ENCODE measurements at regions of chr4 and their contacts with region 1.

Region 1: GRCh38 chr4:163494360-163495162 is at the start of gene TMA16:
- DNase-seq: peak; percentile 90 to 91
- H3K4me3 ChIP-seq: peak within 1 kb of the TSS; percentile 64
- H3K4me3 Mint-ChIP-seq: peak within 1 kb of the TSS; percentile 90
- H3K27ac Mint-ChIP-seq: peak within 1 kb of the TSS; percentile 99
- H3K4me1 ChIP-seq: 0 out of 2 replicates have a peak, but pooled peaks cover 3% of the 10 kb centered on the region
- H3K4me1 Mint-ChIP-seq: peaks cover 5% of the 10 kb centered on the region
- H3K27me3 ChIP-seq: no peaks in the 10 kb centered on the region
- H3K27me3 Mint-ChIP-seq: peaks cover 3% of the 10 kb centered on the region
- CTCF ChIP-seq: no peak
- total RNA-seq, gene TMA16: 23.7 and 31.1 TPM in 2 replicates

Region 2: GRCh38 chr4:163166041-163166579 is 328.5 kb before region 1 on chr4:
- CTCF ChIA-PET with region 1: no interaction called
- POLR2A ChIA-PET with region 1: no interaction called
- intact Hi-C with region 1: loop called (anchors 5 kb)
- DNase-seq: peak; percentile 50 to 61
- H3K4me3 ChIP-seq: peak overlapping the region; percentile 79
- H3K4me3 Mint-ChIP-seq: peak overlapping the region; percentile 83
- H3K27ac Mint-ChIP-seq: peak overlapping the region; percentile 98
- H3K4me1 ChIP-seq: no peaks in the 10 kb centered on the region
- H3K4me1 Mint-ChIP-seq: peaks cover 21% of the 10 kb centered on the region
- H3K27me3 ChIP-seq: no peaks in the 10 kb centered on the region
- H3K27me3 Mint-ChIP-seq: no peaks in the 10 kb centered on the region
- CTCF ChIP-seq: no peak

Region 3: GRCh38 chr4:163335384-163335783 is 159.2 kb before region 1 on chr4:
- CTCF ChIA-PET with region 1: no interaction called
- POLR2A ChIA-PET with region 1: no interaction called
- intact Hi-C with region 1: no loop called
- DNase-seq: no peak
- H3K4me3 ChIP-seq: no peak overlapping the region
- H3K4me3 Mint-ChIP-seq: no peak overlapping the region
- H3K27ac Mint-ChIP-seq: no peak overlapping the region
- H3K4me1 ChIP-seq: no peaks in the 10 kb centered on the region
- H3K4me1 Mint-ChIP-seq: peaks cover 7% of the 10 kb centered on the region
- H3K27me3 ChIP-seq: no peaks in the 10 kb centered on the region
- H3K27me3 Mint-ChIP-seq: peaks cover 14% of the 10 kb centered on the region
- CTCF ChIP-seq: no peak

Region 4: DNA sequence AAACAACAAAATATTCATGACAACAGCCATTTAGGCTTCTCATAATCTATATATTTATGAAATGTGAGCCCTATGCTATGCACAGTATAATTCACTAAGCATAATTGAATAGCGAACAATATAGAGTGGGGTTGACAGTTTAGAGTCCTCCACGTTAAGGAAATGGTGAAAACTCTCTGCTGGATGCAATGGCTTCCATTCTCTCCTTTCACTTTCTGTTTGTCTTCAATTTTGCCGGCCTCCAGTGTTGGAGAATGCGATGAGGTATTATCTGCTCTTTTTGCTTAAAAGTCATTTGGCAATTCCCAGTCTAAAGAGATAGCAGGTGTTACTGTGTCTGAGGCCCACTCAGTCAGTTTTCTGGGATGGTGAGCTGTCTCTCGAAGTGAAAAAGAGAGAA is 98.8 kb before region 1 on chr4:
- CTCF ChIA-PET with region 1: no interaction called
- POLR2A ChIA-PET with region 1: no interaction called
- intact Hi-C with region 1: no loop called
- DNase-seq: no peak
- H3K4me3 ChIP-seq: no peak overlapping the region
- H3K4me3 Mint-ChIP-seq: no peak overlapping the region
- H3K27ac Mint-ChIP-seq: no peak overlapping the region
- H3K4me1 ChIP-seq: no peaks in the 10 kb centered on the region
- H3K4me1 Mint-ChIP-seq: no peaks in the 10 kb centered on the region
- H3K27me3 ChIP-seq: no peaks in the 10 kb centered on the region
- H3K27me3 Mint-ChIP-seq: peaks cover 3% of the 10 kb centered on the region
- CTCF ChIP-seq: no peak

Region 5: DNA sequence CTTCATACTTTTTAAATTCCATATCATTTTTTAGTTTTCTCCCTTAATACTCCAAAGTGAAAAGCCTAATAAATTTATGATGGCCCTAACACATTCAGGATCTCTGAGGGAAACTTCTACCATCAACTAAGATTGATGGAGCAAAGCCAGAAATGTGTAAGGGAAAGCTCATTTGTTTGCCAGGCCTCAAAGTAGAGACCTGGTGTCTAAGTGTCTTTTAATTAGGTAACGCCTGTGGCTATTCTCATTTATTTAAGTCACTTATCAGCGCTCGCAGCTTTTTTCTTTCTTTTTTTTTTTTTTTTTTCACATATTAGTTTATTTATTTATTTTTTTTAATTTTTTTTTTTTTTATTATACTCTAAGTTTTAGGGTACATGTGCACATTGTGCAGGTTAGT is 242.3 kb after region 1 on chr4:
- CTCF ChIA-PET with region 1: no interaction called
- POLR2A ChIA-PET with region 1: no interaction called
- intact Hi-C with region 1: no loop called
- DNase-seq: no peak
- H3K4me3 ChIP-seq: no peak overlapping the region
- H3K4me3 Mint-ChIP-seq: no peak overlapping the region
- H3K27ac Mint-ChIP-seq: no peak overlapping the region
- H3K4me1 ChIP-seq: no peaks in the 10 kb centered on the region
- H3K4me1 Mint-ChIP-seq: no peaks in the 10 kb centered on the region
- H3K27me3 ChIP-seq: no peaks in the 10 kb centered on the region
- H3K27me3 Mint-ChIP-seq: peaks cover 3% of the 10 kb centered on the region
- CTCF ChIP-seq: no peak

Region 6: GRCh38 chr4:164748375-164748774 is 1253.8 kb after region 1 on chr4:
- CTCF ChIA-PET with region 1: no interaction called
- POLR2A ChIA-PET with region 1: no interaction called
- intact Hi-C with region 1: loop called (anchors 5 kb)
- DNase-seq: no peak
- H3K4me3 ChIP-seq: no peak overlapping the region
- H3K4me3 Mint-ChIP-seq: no peak overlapping the region
- H3K27ac Mint-ChIP-seq: no peak overlapping the region
- H3K4me1 ChIP-seq: no peaks in the 10 kb centered on the region
- H3K4me1 Mint-ChIP-seq: no peaks in the 10 kb centered on the region
- H3K27me3 ChIP-seq: no peaks in the 10 kb centered on the region
- H3K27me3 Mint-ChIP-seq: no peaks in the 10 kb centered on the region
- CTCF ChIP-seq: peak; percentile 29 to 42

Measured in Caco-2 (cell line).